ENCODE measurements at regions of chr1 and their contacts with region 1.

Region 1: DNA sequence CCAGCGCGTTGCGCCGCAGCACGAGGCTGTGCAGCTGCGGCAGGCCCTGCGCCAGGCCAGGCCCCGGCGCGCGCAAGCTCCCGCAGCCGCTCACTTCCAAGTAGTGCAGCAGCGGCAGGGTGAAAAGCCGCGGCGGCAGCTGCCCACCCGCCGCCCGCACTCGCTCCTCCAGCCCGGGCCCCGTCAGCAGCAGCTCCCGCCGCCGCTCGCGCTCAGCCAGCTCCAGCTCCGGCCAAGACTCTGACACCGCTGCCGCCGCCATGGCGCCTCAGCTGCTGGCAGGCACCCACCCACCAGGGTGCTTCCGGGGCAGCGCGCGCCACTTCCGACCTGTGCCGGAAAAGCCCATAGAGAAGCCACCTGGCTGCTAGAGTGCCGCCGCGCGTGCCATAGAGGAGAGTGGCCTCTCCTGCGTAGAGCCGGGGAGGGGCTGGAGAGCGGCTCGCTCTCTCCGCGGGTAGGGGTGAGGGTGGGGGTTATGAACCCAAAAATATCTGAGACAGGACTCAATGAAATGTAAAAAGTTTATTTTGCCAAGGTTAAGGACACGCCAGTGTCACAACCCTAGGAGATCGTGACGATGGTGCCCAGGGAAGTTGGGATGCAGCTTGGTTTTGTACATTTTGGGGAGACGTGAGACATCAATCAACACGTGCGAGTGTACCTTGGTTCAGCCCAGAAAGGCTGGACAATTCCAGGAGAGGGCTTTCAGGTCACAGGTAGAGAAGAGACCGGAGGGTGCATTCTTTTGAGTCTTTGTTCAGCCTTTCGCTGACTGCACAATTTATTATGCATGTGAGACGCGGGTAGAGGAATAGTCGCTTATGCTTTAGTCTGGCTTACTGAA is at the start of gene LRRC47:
- DNase-seq: peak; percentile 95
- ATAC-seq: peak; percentile 100
- H3K4me3 Mint-ChIP-seq: peak within 1 kb of the TSS; percentile 83
- H3K27ac Mint-ChIP-seq: peak within 1 kb of the TSS; percentile 88
- H3K4me1 Mint-ChIP-seq: peaks cover 42% of the 10 kb centered on the region
- H3K27me3 Mint-ChIP-seq: peaks cover 10% of the 10 kb centered on the region
- total RNA-seq, gene LRRC47: 36.4 to 39.5 TPM

Region 2: GRCh38 chr1:3775490-3776230 is 20.8 kb before region 1 on chr1:
- CTCF ChIA-PET with region 1: interaction called, 13 read pairs
- POLR2A ChIA-PET with region 1: interaction called, 8 read pairs
- DNase-seq: peak; percentile 62
- ATAC-seq: peak; percentile 25
- H3K4me3 Mint-ChIP-seq: no peak overlapping the region
- H3K27ac Mint-ChIP-seq: no peak overlapping the region
- H3K4me1 Mint-ChIP-seq: peaks cover 6% of the 10 kb centered on the region
- H3K27me3 Mint-ChIP-seq: no peaks in the 10 kb centered on the region

Region 3: DNA sequence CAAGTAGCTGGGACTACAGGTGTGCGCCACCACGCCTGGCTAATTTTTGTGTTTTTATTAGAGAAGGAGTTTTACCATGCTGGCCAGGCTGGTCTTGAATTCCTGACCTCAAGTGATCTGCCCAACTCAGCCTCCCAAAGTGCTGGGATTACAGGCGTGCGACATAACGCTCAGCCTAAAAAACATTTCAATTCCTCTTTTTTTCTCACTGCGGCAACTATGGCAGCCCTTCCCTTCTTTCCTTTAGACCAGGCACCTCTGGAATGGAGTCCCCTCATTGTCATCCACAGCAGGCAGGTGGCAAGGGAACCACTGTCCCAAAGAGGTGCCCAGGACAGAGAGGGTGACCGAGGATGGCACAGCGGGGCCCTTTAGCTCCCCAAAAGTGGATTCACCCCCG is 46.5 kb after region 1 on chr1:
- CTCF ChIA-PET with region 1: no interaction called
- POLR2A ChIA-PET with region 1: no interaction called
- DNase-seq: no peak
- ATAC-seq: no peak
- H3K4me3 Mint-ChIP-seq: no peak overlapping the region
- H3K27ac Mint-ChIP-seq: no peak overlapping the region
- H3K4me1 Mint-ChIP-seq: no peaks in the 10 kb centered on the region
- H3K27me3 Mint-ChIP-seq: no peaks in the 10 kb centered on the region

Region 4: GRCh38 chr1:3883194-3883925 is 86.9 kb after region 1 on chr1:
- CTCF ChIA-PET with region 1: no interaction called
- POLR2A ChIA-PET with region 1: no interaction called
- DNase-seq: no peak
- ATAC-seq: peak; percentile 51
- H3K4me3 Mint-ChIP-seq: no peak overlapping the region
- H3K27ac Mint-ChIP-seq: peak overlapping the region; percentile 69
- H3K4me1 Mint-ChIP-seq: peaks cover 14% of the 10 kb centered on the region
- H3K27me3 Mint-ChIP-seq: no peaks in the 10 kb centered on the region